Mammary epithelial cell (primary cell): ENCODE measurements at regions of chr17 and their contacts with region 1.

Region 1: GRCh38 chr17:72858826-72859495 is 233.5 kb downstream of the SLC39A11 start:
- DNase-seq: no peak
- H3K4me3 ChIP-seq: no peak overlapping the region
- H3K27ac ChIP-seq: no peak overlapping the region
- H3K4me1 ChIP-seq: no peaks in the 10 kb centered on the region
- H3K27me3 ChIP-seq: no peaks in the 10 kb centered on the region
- CTCF ChIP-seq: no peak

Region 2: GRCh38 chr17:72646176-72646575 is 212.8 kb before region 1 on chr17:
- CTCF ChIA-PET with region 1: no interaction called
- dilution Hi-C with region 1: no loop called
- in situ Hi-C with region 1: no loop called
- intact Hi-C with region 1: loop called (anchors 5 kb)
- DNase-seq: no peak
- H3K4me3 ChIP-seq: no peak overlapping the region
- H3K27ac ChIP-seq: no peak overlapping the region
- H3K4me1 ChIP-seq: no peaks in the 10 kb centered on the region
- H3K27me3 ChIP-seq: no peaks in the 10 kb centered on the region
- CTCF ChIP-seq: no peak